MCF 10A (cell line): ENCODE measurements at regions of chr12 and their contacts with region 1.

Region 1: GRCh38 chr12:94101738-94102660 is 46.4 kb upstream of the PLXNC1 start:
- DNase-seq: peak; percentile 92
- H3K4me3 Mint-ChIP-seq: peak overlapping the region; percentile 75
- H3K27ac Mint-ChIP-seq: no peak overlapping the region
- H3K4me1 Mint-ChIP-seq: peaks cover 46% of the 10 kb centered on the region
- H3K27me3 Mint-ChIP-seq: no peaks in the 10 kb centered on the region
- CTCF ChIP-seq: peak; percentile 80

Region 2: GRCh38 chr12:93476555-93476954 is 625.4 kb before region 1 on chr12:
- CTCF ChIA-PET with region 1: interaction called, 19 read pairs
- POLR2A ChIA-PET with region 1: no interaction called
- intact Hi-C with region 1: no loop called
- DNase-seq: no peak
- H3K4me3 Mint-ChIP-seq: no peak overlapping the region
- H3K27ac Mint-ChIP-seq: no peak overlapping the region
- H3K4me1 Mint-ChIP-seq: no peaks in the 10 kb centered on the region
- H3K27me3 Mint-ChIP-seq: no peaks in the 10 kb centered on the region
- CTCF ChIP-seq: no peak

Region 3: GRCh38 chr12:93526786-93527428 is 575.1 kb before region 1 on chr12:
- CTCF ChIA-PET with region 1: interaction called, 16 read pairs
- POLR2A ChIA-PET with region 1: interaction called, 4 read pairs
- intact Hi-C with region 1: no loop called
- DNase-seq: peak; percentile 67
- H3K4me3 Mint-ChIP-seq: no peak overlapping the region
- H3K27ac Mint-ChIP-seq: no peak overlapping the region
- H3K4me1 Mint-ChIP-seq: peaks cover 10% of the 10 kb centered on the region
- H3K27me3 Mint-ChIP-seq: no peaks in the 10 kb centered on the region
- CTCF ChIP-seq: no peak

Region 4: DNA sequence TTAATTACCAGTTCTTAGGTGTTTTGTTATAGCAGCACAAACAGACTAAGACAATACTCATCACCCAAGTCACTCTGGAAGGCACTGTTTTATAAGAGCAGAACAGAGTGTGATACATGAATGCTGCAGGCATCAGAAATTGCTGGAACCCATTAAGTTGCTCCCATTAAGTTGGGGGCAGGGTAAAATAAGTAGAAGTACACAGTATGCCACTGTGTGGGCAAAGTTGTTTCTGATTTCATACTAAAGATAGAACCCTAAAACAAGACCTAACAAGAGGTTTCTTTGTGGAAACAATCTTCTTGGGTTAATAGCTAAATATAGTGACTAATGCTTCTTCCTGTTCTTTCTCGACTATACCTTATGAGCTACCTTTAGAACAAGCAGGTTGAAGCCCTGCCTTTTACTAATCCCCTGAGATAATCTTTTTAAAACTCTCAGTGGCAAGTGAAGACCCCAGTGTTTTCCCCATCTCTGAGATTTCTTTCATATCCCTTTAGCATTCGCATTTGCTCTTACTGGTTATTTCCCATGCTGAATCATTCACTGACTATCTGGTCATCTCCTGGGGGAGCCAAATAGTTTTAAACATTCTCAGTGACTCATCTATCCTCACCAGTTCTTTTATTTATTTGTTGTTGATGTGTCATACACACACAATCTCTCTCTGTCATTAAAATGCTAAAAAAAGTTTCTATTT is 477.3 kb before region 1 on chr12:
- CTCF ChIA-PET with region 1: interaction called, 8 read pairs
- POLR2A ChIA-PET with region 1: interaction called, 5 read pairs
- intact Hi-C with region 1: loop called (anchors 1 kb)
- DNase-seq: peak; percentile 93
- H3K4me3 Mint-ChIP-seq: peak overlapping the region; percentile 4
- H3K27ac Mint-ChIP-seq: peak overlapping the region; percentile 85
- H3K4me1 Mint-ChIP-seq: peaks cover 18% of the 10 kb centered on the region
- H3K27me3 Mint-ChIP-seq: no peaks in the 10 kb centered on the region
- CTCF ChIP-seq: no peak

Region 5: GRCh38 chr12:93766796-93767523 is 335.0 kb before region 1 on chr12:
- CTCF ChIA-PET with region 1: interaction called, 230 read pairs
- POLR2A ChIA-PET with region 1: interaction called, 61 read pairs
- intact Hi-C with region 1: loop called (anchors 1 kb)
- DNase-seq: peak; percentile 77
- H3K4me3 Mint-ChIP-seq: no peak overlapping the region
- H3K27ac Mint-ChIP-seq: no peak overlapping the region
- H3K4me1 Mint-ChIP-seq: peaks cover 26% of the 10 kb centered on the region
- H3K27me3 Mint-ChIP-seq: no peaks in the 10 kb centered on the region
- CTCF ChIP-seq: peak; percentile 57

Region 6: DNA sequence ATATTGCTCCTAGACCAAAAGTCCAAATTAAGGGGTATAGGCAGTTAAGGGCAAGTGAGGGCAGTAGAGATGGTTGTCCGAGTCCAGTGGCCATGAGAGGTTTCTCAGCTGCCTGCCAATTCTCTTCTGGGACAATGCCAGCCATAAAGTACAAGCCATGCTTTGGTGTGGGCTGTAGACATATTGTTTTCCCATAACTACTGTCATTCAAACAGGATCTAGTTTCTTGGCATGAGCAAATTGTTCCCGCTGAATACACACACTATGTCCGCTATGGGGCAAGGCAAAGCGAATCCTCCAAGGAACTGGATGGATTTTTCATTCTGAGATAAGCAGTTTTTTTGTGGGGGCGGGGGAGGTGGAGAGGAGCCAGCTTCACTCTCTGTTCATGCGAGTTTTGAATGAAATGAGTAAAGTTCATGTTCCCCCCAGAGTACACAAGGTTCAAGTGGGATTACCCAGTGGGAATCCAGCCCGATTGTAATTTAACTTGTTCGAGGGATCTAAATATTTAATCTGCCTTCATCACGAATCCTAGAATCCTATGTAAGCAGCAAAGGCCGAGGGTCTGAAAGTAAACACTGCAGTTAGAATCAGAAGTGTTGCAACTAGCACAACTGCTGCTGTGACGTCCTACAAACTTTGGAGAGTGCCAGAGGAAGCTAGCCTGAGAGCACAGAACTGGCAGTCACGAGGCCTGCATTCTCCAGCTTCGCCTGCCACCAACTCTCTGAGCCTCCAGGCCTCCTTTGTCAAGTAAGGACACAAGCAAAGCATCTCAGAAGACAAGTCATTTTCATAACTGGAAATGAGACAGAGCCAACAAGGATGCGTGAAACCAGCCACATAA is 287.8 kb before region 1 on chr12:
- CTCF ChIA-PET with region 1: interaction called, 13 read pairs
- POLR2A ChIA-PET with region 1: interaction called, 13 read pairs
- intact Hi-C with region 1: no loop called
- DNase-seq: no peak
- H3K4me3 Mint-ChIP-seq: no peak overlapping the region
- H3K27ac Mint-ChIP-seq: peak overlapping the region; percentile 69
- H3K4me1 Mint-ChIP-seq: peaks cover 33% of the 10 kb centered on the region
- H3K27me3 Mint-ChIP-seq: no peaks in the 10 kb centered on the region
- CTCF ChIP-seq: no peak

Region 7: GRCh38 chr12:94074980-94075928 is 26.7 kb before region 1 on chr12:
- CTCF ChIA-PET with region 1: interaction called, 96 read pairs
- POLR2A ChIA-PET with region 1: interaction called, 36 read pairs
- intact Hi-C with region 1: loop called (anchors 1 kb)
- DNase-seq: peak; percentile 86
- H3K4me3 Mint-ChIP-seq: no peak overlapping the region
- H3K27ac Mint-ChIP-seq: no peak overlapping the region
- H3K4me1 Mint-ChIP-seq: peaks cover 33% of the 10 kb centered on the region
- H3K27me3 Mint-ChIP-seq: no peaks in the 10 kb centered on the region
- CTCF ChIP-seq: peak; percentile 50